Posterior vena cava (tissue), 2 donors: ENCODE measurements at regions of chr6 and their contacts with region 1.

Region 1: GRCh38 chr6:129497481-129498240 is 212.3 kb downstream of the ARHGAP18 start:
- DNase-seq: no peak

Region 2: DNA sequence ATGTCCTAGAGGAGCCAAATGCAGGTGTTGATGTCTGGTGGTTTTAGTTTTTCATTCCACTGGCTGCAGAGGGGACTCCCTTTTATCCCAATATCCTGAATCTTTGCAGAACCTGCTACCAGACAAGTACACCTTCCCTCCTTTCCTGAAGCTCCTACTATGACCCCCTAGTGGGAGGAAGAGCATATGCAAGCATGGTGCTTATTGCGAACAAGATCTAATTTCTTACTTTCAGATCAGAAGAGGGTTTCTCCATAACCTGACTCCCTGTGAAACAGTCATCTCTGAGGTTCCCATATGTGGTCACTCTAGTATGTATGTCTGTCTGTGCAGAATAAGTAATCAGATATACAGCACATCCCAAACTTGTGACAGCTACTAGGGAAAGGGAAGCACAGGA is 64.9 kb before region 1 on chr6:
- intact Hi-C with region 1: no loop called
- DNase-seq: no peak

Region 3: GRCh38 chr6:129460221-129460620 is 37.4 kb before region 1 on chr6:
- intact Hi-C with region 1: loop called in 1 of 2 experiments (anchors 1 kb)
- DNase-seq: no peak